ENCODE measurements at regions of chr4 and their contacts with region 1.

Region 1: GRCh38 chr4:18366892-18367291 is 345.3 kb upstream of the LCORL start:
- DNase-seq: no peak
- ATAC-seq: peak; percentile 90
- H3K4me3 ChIP-seq: no peak overlapping the region
- H3K27ac ChIP-seq: no peak overlapping the region
- H3K4me1 ChIP-seq: no peaks in the 10 kb centered on the region
- H3K27me3 ChIP-seq: no peaks in the 10 kb centered on the region
- CTCF ChIP-seq: peak; percentile 13 to 60 (median 43); a peak in 3 of 6 replicates
- POLR2A ChIP-seq: no peak
- RAD21 ChIP-seq: peak; percentile 57

Region 2: DNA sequence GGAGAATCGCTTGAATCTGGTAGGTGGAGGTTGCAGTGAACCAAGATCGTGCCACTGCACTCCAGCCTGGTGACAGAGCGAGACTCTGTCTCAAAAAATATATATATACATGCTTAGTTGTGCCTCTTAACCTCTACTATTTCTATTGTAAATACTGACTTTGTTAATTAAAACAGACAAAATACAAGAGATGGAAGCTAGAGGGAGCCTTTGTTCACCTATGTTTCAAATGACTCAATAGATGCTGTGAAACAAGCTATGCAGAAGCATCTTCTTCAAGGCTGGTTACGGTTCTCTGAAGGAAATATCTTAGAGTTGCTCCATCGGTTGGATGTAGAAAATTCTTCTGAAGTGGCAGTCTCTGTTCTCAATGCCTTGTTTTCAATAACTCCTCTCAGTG is 549.9 kb before region 1 on chr4:
- CTCF ChIA-PET with region 1: interaction called, 3 read pairs
- POLR2A ChIA-PET with region 1: no interaction called
- RAD21 ChIA-PET with region 1: no interaction called
- intact Hi-C with region 1: loop called (anchors 1 kb)
- DNase-seq: peak; percentile 10
- ATAC-seq: peak; percentile 80
- H3K4me3 ChIP-seq: no peak overlapping the region
- H3K27ac ChIP-seq: no peak overlapping the region
- H3K4me1 ChIP-seq: peaks cover 5 to 9% of the 10 kb centered on the region in 2 experiments; a peak in 2 of 4 replicates
- H3K27me3 ChIP-seq: no peaks in the 10 kb centered on the region
- CTCF ChIP-seq: peak; percentile 30 to 49 (median 31); a peak in 4 of 6 replicates
- POLR2A ChIP-seq: no peak
- RAD21 ChIP-seq: peak; percentile 50

Region 3: GRCh38 chr4:17934286-17934685 is 432.6 kb before region 1 on chr4:
- CTCF ChIA-PET with region 1: no interaction called
- POLR2A ChIA-PET with region 1: no interaction called
- RAD21 ChIA-PET with region 1: no interaction called
- intact Hi-C with region 1: loop called (anchors 5 kb)
- DNase-seq: no peak
- ATAC-seq: no peak
- H3K4me3 ChIP-seq: no peak overlapping the region
- H3K27ac ChIP-seq: no peak overlapping the region
- H3K4me1 ChIP-seq: no peaks in the 10 kb centered on the region
- H3K27me3 ChIP-seq: no peaks in the 10 kb centered on the region
- CTCF ChIP-seq: no peak; a peak in 2 of 6 replicates
- POLR2A ChIP-seq: no peak
- RAD21 ChIP-seq: peak; percentile 13; the same call in 1 of the 2 replicates

Region 4: GRCh38 chr4:18039113-18039512 is 327.8 kb before region 1 on chr4:
- CTCF ChIA-PET with region 1: no interaction called
- POLR2A ChIA-PET with region 1: no interaction called
- RAD21 ChIA-PET with region 1: no interaction called
- intact Hi-C with region 1: no loop called
- DNase-seq: no peak
- ATAC-seq: no peak
- H3K4me3 ChIP-seq: no peak overlapping the region
- H3K27ac ChIP-seq: no peak overlapping the region
- H3K4me1 ChIP-seq: no peaks in the 10 kb centered on the region
- H3K27me3 ChIP-seq: no peaks in the 10 kb centered on the region
- CTCF ChIP-seq: no peak
- POLR2A ChIP-seq: no peak
- RAD21 ChIP-seq: no peak

Region 5: GRCh38 chr4:18057821-18058533 is 308.9 kb before region 1 on chr4:
- CTCF ChIA-PET with region 1: no interaction called
- POLR2A ChIA-PET with region 1: no interaction called
- RAD21 ChIA-PET with region 1: no interaction called
- intact Hi-C with region 1: no loop called
- DNase-seq: no peak
- ATAC-seq: no peak
- H3K4me3 ChIP-seq: no peak overlapping the region
- H3K27ac ChIP-seq: no peak overlapping the region
- H3K4me1 ChIP-seq: no peaks in the 10 kb centered on the region
- H3K27me3 ChIP-seq: no peaks in the 10 kb centered on the region
- CTCF ChIP-seq: no peak
- POLR2A ChIP-seq: no peak
- RAD21 ChIP-seq: no peak